ENCODE measurements at regions of chr18 and their contacts with region 1.

Region 1: DNA sequence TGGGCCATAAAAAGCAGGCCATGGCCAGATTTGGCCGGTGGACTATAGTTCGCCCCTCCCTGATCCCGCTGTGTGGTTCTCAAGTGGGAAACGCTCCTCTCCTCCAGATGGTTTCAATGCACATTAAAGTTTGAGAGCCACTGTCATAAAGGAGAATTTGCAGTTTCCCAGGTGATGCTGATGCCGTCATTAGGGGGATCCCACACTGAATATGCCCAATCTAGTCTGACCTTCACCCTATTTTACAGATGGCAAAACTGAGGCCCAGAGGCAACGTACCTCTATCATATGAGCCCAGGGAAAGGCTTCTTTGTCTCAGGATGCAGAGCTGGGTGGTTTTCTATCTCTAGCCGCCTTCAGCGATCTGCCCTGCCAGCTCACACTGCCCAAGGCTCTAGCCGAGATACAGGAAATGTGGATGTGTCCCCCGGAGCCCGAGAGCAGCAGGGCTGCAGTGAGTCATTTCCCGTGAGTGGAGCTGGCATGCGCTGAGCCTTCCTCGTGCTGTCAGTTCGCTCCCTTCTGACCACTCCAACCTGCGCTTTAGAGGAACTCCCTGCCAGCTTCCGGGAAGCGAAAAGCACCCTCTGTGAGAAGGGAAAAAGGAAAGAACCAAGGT is 116.2 kb downstream of the SMAD7 start:
- DNase-seq: peak; percentile 68
- H3K4me3 Mint-ChIP-seq: peak overlapping the region; percentile 86
- H3K27ac Mint-ChIP-seq: peak overlapping the region; percentile 99
- H3K4me1 Mint-ChIP-seq: peaks cover 77% of the 10 kb centered on the region
- H3K27me3 Mint-ChIP-seq: peaks cover 2% of the 10 kb centered on the region

Region 2: DNA sequence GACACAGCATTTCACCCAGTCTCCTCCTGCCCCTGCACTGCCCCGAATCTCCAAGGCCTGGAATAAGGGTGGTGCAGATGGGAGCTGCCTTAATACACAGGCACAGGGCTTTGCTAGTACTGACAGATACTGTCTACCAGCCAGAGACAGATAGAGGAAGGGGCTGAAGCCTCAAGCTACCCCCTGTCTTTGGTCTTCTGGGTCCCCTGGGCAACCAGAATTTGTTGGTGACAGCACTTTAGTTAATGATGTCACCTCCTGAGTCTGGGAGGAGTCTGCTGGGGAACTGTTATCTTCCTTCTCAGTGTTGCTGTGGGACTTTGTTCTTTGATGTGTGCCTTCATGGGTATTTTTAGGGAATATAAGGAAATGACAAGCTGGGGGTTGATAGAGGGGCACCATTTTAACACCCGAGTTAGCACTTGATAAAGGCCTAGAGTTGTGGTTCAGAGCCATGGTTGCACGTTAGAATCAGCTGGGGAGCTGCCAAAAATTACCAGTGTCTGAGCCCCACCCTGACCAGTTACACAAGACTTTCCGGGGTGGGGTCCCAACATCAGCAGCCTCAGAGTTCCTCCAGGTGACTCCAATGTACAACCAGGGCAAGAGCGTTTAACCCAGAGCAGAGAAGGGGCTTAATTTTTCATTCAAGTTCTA is 20.6 kb before region 1 on chr18:
- intact Hi-C with region 1: loop called (anchors 1 kb)
- DNase-seq: peak; percentile 36
- H3K4me3 Mint-ChIP-seq: peak overlapping the region; percentile 40
- H3K27ac Mint-ChIP-seq: peak overlapping the region; percentile 90
- H3K4me1 Mint-ChIP-seq: peaks cover 62% of the 10 kb centered on the region
- H3K27me3 Mint-ChIP-seq: peaks cover 4% of the 10 kb centered on the region

Region 3: DNA sequence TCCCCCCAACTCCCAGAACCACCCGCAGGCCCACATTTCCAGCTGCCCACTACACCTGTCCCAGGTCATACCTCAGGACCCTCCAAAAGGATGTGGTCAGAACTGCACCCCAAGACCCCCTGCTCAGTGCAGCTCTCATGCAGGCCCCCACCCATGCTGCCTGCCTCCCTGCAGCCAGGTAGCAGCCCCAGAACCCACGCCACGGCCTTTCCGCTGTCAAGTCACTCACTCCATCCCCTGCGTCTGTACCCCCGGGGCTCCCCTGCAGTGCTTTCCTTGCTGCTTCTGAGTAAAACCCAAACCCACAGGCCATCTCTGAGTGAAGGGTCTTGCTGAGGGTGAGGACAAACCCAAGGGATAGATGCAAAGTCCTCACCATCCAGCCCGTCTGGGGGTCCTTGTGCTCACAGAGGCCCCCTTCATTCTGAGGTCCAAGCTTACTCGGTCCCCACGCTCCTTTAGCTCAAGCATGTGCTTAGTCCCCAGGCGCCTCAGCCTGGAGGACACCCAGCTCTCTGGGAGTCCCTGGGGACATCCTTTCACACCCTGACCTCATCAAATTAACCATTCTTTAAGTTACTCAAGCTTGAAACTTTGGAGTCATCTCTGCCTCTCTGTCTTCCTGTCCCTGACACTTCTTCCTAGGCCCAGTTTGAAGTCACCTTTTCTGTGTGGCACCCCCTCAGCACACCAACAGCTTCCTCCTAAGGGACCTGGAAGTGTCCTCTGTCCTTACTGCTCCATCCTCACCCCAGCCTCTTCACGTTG is 13.9 kb before region 1 on chr18:
- intact Hi-C with region 1: loop called (anchors 1 kb)
- DNase-seq: no peak
- H3K4me3 Mint-ChIP-seq: peak overlapping the region; percentile 21
- H3K27ac Mint-ChIP-seq: peak overlapping the region; percentile 62
- H3K4me1 Mint-ChIP-seq: peaks cover 51% of the 10 kb centered on the region
- H3K27me3 Mint-ChIP-seq: peaks cover 10% of the 10 kb centered on the region

Region 4: DNA sequence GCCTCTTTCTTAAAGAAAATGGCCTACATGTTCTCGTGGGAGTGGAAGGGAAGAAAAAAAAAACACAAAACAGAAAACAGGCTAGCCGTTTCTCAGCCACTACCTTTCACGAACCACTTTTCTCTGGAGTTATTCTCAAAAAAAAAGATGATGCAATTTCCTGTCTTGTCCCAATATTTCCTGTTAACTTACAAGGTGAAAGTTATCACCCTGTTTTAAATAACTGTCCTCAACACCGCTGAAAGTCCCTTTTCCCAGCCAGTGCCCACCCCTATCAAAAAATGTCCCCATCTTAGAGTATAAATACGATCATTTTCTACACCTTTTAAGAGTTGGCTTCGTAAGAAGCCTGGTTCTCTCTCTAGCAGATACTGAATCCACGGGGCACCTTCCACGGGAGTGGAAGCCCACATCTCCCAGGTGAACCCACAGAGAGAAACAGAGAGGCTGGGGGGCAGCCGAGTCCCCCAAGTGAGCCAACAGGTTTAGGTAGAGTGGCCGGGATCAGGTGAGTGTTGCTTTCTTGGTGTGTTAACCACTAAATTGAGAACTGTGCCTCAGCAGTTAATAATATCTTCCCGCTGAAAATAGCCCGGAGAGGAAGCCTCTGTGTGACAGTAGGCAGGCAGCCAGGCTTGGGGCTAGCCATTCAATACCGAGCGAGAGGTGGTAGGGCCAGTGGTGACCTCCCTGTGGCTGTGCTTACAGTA is 100.4 kb after region 1 on chr18:
- intact Hi-C with region 1: loop called (anchors 5 kb)
- DNase-seq: no peak
- H3K4me3 Mint-ChIP-seq: peak overlapping the region; percentile 48
- H3K27ac Mint-ChIP-seq: peak overlapping the region; percentile 75
- H3K4me1 Mint-ChIP-seq: peaks cover 82% of the 10 kb centered on the region
- H3K27me3 Mint-ChIP-seq: no peaks in the 10 kb centered on the region

Measured in activated T-helper 1 cell treated with anti-CD3 and anti-CD28 coated beads, Interleukin-12 subunit alpha, Interleukin-12 subunit beta, Interleukin-2, Interleukin-4 antibody, amounts not matched to agents 30 ng/mL and 10 ng/mL and 1 ng/mL, durations not matched to agents 14 hours and 24 hours and 36 hours (primary cell).